ENCODE measurements at regions of chr9 and their contacts with region 1.

Region 1: DNA sequence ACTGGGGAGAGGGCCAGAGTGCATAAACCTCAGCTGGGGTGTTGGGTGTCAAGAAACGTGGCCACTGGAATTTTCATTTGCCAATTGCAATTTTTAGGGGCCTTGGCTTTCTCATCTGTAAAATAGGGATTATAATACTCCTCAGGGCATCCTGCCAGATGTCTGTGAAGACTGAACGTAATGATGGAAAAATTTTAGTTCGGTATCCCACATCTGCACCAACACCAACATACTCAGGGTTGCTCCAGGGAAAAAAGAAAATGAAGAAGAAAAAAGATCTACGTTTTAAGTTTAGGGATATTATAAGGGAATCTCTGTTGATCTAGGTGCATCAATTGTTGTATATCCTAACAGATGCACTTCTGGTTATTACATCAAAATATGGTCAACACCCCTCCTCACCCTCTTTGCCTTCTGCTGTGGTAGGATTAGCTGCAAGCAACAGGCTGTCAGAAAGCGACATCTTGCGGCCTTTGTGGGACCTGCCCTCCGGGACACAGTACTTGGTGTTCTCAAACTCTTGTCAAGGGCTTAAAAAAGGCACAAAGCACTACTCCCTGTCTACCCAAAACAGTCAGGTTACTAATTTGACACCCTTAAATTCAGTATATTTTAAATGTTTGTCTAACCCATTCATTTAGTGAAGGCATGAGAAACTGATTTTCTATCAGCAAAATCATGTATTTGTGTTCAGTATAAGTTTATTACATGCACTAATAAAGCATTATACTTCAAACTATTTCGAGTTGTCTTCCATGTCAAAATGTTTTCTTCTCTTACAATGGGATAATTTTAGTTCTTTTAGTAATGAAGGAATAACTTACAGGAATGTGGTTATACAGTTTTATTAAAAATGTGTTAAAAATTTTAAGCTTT is 8.3 kb upstream of the TBC1D2 start:
- DNase-seq: peak; percentile 78
- ATAC-seq: peak; percentile 94 to 96

Region 2: GRCh38 chr9:97468658-97469448 is 794.9 kb before region 1 on chr9:
- intact Hi-C with region 1: loop called in 1 of 2 experiments (anchors 10 kb)
- DNase-seq: peak; percentile 76
- ATAC-seq: peak; percentile 97 to 98

Region 3: DNA sequence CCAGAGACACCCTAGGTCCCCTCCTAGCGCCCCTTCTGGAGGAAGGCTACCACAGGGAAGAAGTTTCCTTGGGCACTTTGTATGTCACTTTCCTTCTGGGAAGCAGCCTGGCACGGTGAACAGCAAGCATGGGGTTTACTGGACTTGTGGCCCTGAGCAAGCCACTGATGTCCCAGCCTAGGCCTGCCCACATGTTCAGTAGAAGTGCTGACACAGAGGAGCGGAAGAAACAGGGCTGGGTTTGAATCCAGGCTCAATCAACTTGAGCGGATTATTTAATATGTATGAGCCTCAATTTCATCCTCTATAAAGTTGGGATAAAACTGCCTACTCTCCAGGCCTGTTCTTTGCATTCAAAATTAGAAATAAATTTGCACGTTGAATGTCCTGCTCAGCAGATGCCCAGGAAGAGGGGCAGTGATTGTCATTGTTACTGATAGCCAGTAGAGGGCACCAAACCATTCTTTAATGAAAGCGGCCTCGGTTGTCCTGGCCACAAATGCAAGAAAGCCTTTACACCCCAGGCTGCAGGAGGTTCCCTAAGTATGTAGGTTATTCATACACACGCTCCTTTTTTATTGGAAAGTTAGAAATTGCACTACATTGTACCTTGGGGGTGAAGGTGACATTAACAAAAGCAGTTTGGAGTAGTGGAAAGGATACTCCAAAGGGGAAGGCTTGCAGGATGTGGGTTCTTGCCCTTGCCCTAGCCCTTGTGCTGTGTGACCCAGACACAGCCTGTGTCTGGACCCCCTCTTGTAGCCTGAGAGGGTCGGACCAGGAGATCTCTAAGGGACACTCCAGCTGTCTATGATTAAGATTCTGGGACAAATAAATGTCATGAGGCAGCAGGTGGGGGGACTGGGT is 553.1 kb before region 1 on chr9:
- intact Hi-C with region 1: loop called (anchors 10 kb)
- DNase-seq: peak; percentile 44
- ATAC-seq: peak; percentile 86 to 89

Region 4: GRCh38 chr9:98074115-98074990 is 189.4 kb before region 1 on chr9:
- intact Hi-C with region 1: loop called (anchors 5 to 10 kb)
- DNase-seq: peak; percentile 41
- ATAC-seq: peak; percentile 44 to 71

Region 5: GRCh38 chr9:98207606-98208005 is 56.1 kb before region 1 on chr9:
- intact Hi-C with region 1: loop called in 1 of 2 experiments (anchors 2 kb)
- DNase-seq: no peak
- ATAC-seq: no peak

Measured in left cardiac atrium (tissue), 4 donors.